ENCODE measurements at regions of chr18 and their contacts with region 1.

Region 1: DNA sequence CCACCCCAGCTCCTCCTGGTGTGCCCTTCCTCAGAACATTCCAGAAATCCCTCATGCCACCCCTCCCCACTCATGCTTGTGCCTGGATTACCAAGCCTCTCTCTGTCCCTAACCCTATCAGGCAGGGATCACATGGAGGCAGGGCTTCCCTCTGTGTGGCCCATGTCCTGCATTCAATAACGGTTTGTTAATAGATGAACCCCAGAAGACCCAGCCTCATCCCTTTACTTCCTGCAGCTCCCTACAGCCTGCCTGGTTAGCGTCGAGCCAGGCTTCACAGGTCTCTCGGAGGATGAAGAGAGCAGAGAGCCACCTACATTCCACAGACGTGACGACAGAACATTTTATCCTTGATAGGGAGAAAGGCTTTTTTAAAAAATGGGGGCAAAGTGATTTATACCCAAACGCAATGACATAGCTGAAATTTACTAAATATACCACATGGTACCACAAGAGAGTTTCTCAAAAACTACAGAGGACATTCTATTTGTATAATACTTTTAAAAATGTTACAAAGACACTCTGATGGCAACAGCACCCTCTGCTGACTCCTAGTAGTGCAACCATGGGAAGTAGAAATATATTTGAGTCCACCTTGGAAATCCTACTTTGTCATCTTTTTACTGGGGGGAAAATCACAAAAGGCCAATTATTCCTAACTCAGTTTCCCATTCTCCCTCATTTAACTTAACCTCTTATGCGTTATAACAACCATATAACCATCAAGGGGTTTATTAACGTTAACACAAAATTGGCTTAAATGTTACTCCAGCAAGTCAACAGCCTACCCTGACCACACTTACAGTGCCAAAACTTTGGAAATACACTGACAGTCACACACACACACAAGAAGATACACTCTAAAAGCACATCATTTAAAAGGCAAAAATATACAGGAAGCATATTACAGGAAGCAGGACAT is 30.7 kb downstream of the FBXO15 start:
- DNase-seq: peak in 6 of 14 experiments; percentile 3 to 57 (median 32)
- ATAC-seq: peak; percentile 43
- H3K4me3 ChIP-seq: no peak overlapping the region
- H3K4me3 Mint-ChIP-seq: no peak overlapping the region
- H3K27ac ChIP-seq: no peak overlapping the region
- H3K27ac Mint-ChIP-seq: no peak overlapping the region
- H3K4me1 ChIP-seq: no peaks in the 10 kb centered on the region
- H3K4me1 Mint-ChIP-seq: peaks cover 5% of the 10 kb centered on the region
- H3K27me3 ChIP-seq: no peaks in the 10 kb centered on the region
- H3K27me3 Mint-ChIP-seq: no peaks in the 10 kb centered on the region
- CTCF ChIP-seq: peak; percentile 54

Region 2: GRCh38 chr18:72762515-72763122 is 1354.3 kb before region 1 on chr18:
- CTCF ChIA-PET with region 1: no interaction called
- POLR2A ChIA-PET with region 1: no interaction called
- intact Hi-C with region 1: loop called in 1 of 2 experiments (anchors 5 kb)
- DNase-seq: peak in 3 of 14 experiments; percentile 6 to 38 (median 23)
- ATAC-seq: no peak
- H3K4me3 ChIP-seq: no peak overlapping the region
- H3K4me3 Mint-ChIP-seq: no peak overlapping the region
- H3K27ac ChIP-seq: no peak overlapping the region
- H3K27ac Mint-ChIP-seq: no peak overlapping the region
- H3K4me1 ChIP-seq: no peaks in the 10 kb centered on the region
- H3K4me1 Mint-ChIP-seq: no peaks in the 10 kb centered on the region
- H3K27me3 ChIP-seq: no peaks in the 10 kb centered on the region
- H3K27me3 Mint-ChIP-seq: no peaks in the 10 kb centered on the region
- CTCF ChIP-seq: peak; percentile 64

Region 3: GRCh38 chr18:74040459-74041332 is 76.2 kb before region 1 on chr18:
- CTCF ChIA-PET with region 1: no interaction called
- POLR2A ChIA-PET with region 1: no interaction called
- intact Hi-C with region 1: loop called in 1 of 2 experiments (anchors 2 kb)
- DNase-seq: peak; percentile 40 to 76 (median 50)
- ATAC-seq: peak; percentile 69
- H3K4me3 ChIP-seq: no peak overlapping the region
- H3K4me3 Mint-ChIP-seq: no peak overlapping the region
- H3K27ac ChIP-seq: no peak overlapping the region
- H3K27ac Mint-ChIP-seq: no peak overlapping the region
- H3K4me1 ChIP-seq: no peaks in the 10 kb centered on the region
- H3K4me1 Mint-ChIP-seq: no peaks in the 10 kb centered on the region
- H3K27me3 ChIP-seq: peaks cover 0 to 3% of the 10 kb centered on the region in 2 experiments
- H3K27me3 Mint-ChIP-seq: no peaks in the 10 kb centered on the region
- CTCF ChIP-seq: peak; percentile 52

Region 4: GRCh38 chr18:74081966-74082741 is 34.7 kb before region 1 on chr18:
- CTCF ChIA-PET with region 1: interaction called, 6 read pairs
- POLR2A ChIA-PET with region 1: no interaction called
- intact Hi-C with region 1: loop called (anchors 1 to 5 kb)
- DNase-seq: peak; percentile 43 to 84 (median 62)
- ATAC-seq: peak; percentile 97
- H3K4me3 ChIP-seq: peak overlapping the region; percentile 38
- H3K4me3 Mint-ChIP-seq: peak overlapping the region; percentile 78
- H3K27ac ChIP-seq: peak overlapping the region; percentile 61 to 74
- H3K27ac Mint-ChIP-seq: peak overlapping the region; percentile 85
- H3K4me1 ChIP-seq: peaks cover 16% of the 10 kb centered on the region
- H3K4me1 Mint-ChIP-seq: peaks cover 22% of the 10 kb centered on the region
- H3K27me3 ChIP-seq: no peaks in the 10 kb centered on the region
- H3K27me3 Mint-ChIP-seq: no peaks in the 10 kb centered on the region
- CTCF ChIP-seq: peak; percentile 60